MCF 10A (cell line): ENCODE measurements at regions of chr2 and their contacts with region 1.

Region 1: GRCh38 chr2:9234680-9235387 is 28.2 kb downstream of the ASAP2 start:
- DNase-seq: peak; percentile 90
- H3K4me3 Mint-ChIP-seq: peak overlapping the region; percentile 67
- H3K27ac Mint-ChIP-seq: peak overlapping the region; percentile 97
- H3K4me1 Mint-ChIP-seq: peaks cover 66% of the 10 kb centered on the region
- H3K27me3 Mint-ChIP-seq: no peaks in the 10 kb centered on the region
- CTCF ChIP-seq: no peak

Region 2: GRCh38 chr2:9142551-9143263 is 92.1 kb before region 1 on chr2:
- CTCF ChIA-PET with region 1: interaction called, 10 read pairs
- POLR2A ChIA-PET with region 1: interaction called, 6 read pairs
- intact Hi-C with region 1: loop called (anchors 1 kb)
- DNase-seq: peak; percentile 84
- H3K4me3 Mint-ChIP-seq: peak overlapping the region; percentile 44
- H3K27ac Mint-ChIP-seq: peak overlapping the region; percentile 23
- H3K4me1 Mint-ChIP-seq: peaks cover 20% of the 10 kb centered on the region
- H3K27me3 Mint-ChIP-seq: no peaks in the 10 kb centered on the region
- CTCF ChIP-seq: peak; percentile 96

Region 3: GRCh38 chr2:9205963-9206948 is 28.6 kb before region 1 on chr2 and contains the start of gene ASAP2:
- CTCF ChIA-PET with region 1: interaction called, 54 read pairs
- POLR2A ChIA-PET with region 1: interaction called, 54 read pairs
- intact Hi-C with region 1: loop called (anchors 1 kb)
- DNase-seq: peak; percentile 67
- H3K4me3 Mint-ChIP-seq: peak within 1 kb of the TSS; percentile 81
- H3K27ac Mint-ChIP-seq: peak within 1 kb of the TSS; percentile 69
- H3K4me1 Mint-ChIP-seq: peaks cover 10% of the 10 kb centered on the region
- H3K27me3 Mint-ChIP-seq: no peaks in the 10 kb centered on the region
- CTCF ChIP-seq: peak; percentile 88
- total RNA-seq, gene ASAP2: 80.8 and 89.5 TPM in 2 replicates

Region 4: GRCh38 chr2:9244985-9245544 is 10.2 kb after region 1 on chr2:
- CTCF ChIA-PET with region 1: interaction called, 14 read pairs
- POLR2A ChIA-PET with region 1: interaction called, 142 read pairs
- intact Hi-C with region 1: loop called (anchors 1 kb)
- DNase-seq: peak; percentile 56
- H3K4me3 Mint-ChIP-seq: peak overlapping the region; percentile 52
- H3K27ac Mint-ChIP-seq: peak overlapping the region; percentile 93
- H3K4me1 Mint-ChIP-seq: peaks cover 62% of the 10 kb centered on the region
- H3K27me3 Mint-ChIP-seq: no peaks in the 10 kb centered on the region
- CTCF ChIP-seq: no peak

Region 5: DNA sequence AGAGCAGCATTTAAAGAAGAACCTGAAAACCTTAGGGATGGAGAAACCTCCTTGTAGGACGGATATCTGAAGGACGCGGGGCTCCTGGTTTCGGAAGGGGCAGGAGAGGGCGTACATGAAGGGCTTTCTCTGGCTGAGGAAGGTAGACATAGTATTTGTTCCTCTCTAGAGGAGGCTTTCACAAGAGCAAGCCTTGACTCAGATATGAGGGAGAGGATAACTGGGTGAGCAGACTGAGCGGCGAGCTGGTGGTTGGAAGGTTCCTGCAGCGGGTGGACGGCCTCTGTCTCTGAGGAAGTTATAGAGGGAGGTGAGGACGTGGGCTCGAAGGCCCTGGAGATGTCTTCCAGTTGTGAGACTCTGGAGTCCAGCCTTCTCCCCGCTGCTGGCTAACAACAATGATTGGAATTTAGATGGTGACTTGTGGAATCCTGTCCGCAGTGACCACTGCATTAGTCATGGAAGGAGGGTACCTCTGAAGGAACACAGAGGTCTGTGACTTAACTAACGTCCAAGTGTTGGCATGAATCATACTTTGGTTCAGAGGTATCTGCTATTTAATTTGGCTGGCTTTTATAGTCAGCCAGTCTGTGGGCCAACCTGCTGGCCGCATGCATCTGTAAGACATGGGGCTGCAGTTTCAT is 52.7 kb after region 1 on chr2:
- CTCF ChIA-PET with region 1: interaction called, 4 read pairs
- POLR2A ChIA-PET with region 1: interaction called, 50 read pairs
- intact Hi-C with region 1: loop called (anchors 1 kb)
- DNase-seq: peak; percentile 97
- H3K4me3 Mint-ChIP-seq: peak overlapping the region; percentile 50
- H3K27ac Mint-ChIP-seq: peak overlapping the region; percentile 84
- H3K4me1 Mint-ChIP-seq: peaks cover 58% of the 10 kb centered on the region
- H3K27me3 Mint-ChIP-seq: no peaks in the 10 kb centered on the region
- CTCF ChIP-seq: no peak

Region 6: GRCh38 chr2:9333591-9334171 is 98.8 kb after region 1 on chr2:
- CTCF ChIA-PET with region 1: interaction called, 6 read pairs
- POLR2A ChIA-PET with region 1: interaction called, 3 read pairs
- intact Hi-C with region 1: loop called (anchors 2 kb)
- DNase-seq: peak; percentile 78
- H3K4me3 Mint-ChIP-seq: no peak overlapping the region
- H3K27ac Mint-ChIP-seq: peak overlapping the region; percentile 87
- H3K4me1 Mint-ChIP-seq: peaks cover 31% of the 10 kb centered on the region
- H3K27me3 Mint-ChIP-seq: no peaks in the 10 kb centered on the region
- CTCF ChIP-seq: peak; percentile 76

Region 7: GRCh38 chr2:10162586-10163497 is 928.0 kb after region 1 on chr2:
- CTCF ChIA-PET with region 1: no interaction called
- POLR2A ChIA-PET with region 1: no interaction called
- intact Hi-C with region 1: no loop called
- DNase-seq: no peak
- H3K4me3 Mint-ChIP-seq: no peak overlapping the region
- H3K27ac Mint-ChIP-seq: no peak overlapping the region
- H3K4me1 Mint-ChIP-seq: peaks cover 8% of the 10 kb centered on the region
- H3K27me3 Mint-ChIP-seq: no peaks in the 10 kb centered on the region
- CTCF ChIP-seq: no peak